CD4-positive, alpha-beta memory T cell (primary cell): ENCODE measurements at regions of chr11 and their contacts with region 1.

Region 1: DNA sequence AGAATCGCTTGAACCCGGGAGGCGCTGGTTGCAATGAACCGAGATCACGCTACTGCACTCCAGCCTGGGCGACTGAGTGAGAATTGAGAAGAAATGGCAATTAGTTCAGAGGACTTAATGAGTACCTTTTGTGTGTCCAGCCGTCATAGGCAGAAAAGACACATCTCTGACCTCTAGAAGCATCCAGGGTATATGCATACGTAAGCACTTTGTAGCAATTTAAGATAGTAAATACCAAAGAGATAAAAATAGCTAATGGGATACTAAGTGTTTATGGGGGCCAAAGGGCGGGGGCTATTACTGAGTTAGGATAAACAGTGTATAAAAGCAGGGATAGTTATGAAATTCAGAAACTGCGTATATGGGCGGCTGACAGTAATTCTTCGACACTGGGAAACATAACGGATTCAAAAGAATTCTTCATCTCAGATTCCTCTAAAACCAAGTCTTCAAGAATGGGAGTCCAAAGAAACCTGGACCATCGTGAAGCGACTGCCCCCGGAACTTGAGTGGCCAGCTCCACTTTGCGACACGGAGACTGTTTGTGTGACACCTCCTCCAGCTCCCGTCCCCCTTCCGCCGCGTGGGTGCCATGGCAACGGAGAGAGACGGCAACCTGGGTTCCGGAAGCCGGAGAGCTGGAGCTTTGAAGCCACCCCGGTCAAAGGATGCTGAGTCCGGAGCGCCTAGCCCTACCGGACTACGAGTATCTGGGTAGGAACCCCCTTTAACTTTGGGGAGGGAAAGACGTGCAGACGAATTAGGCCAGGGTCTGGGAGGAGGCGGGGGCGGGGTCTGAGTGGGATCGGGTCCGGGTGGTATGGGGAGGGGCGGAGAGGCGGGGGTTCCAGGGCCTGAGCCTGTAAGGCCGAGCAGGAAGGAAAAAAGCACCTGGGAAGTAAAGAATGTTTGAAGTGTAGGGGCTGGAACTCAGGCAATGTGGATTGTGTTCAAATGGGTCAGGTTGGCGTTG is at the start of gene CSTPP1:
- DNase-seq: peak; percentile 87 to 91 (median 88)
- H3K4me3 ChIP-seq: peak within 1 kb of the TSS; percentile 39 to 50
- H3K4me3 Mint-ChIP-seq: peak within 1 kb of the TSS; percentile 91 to 97 (median 94)
- H3K27ac ChIP-seq: peak within 1 kb of the TSS; percentile 41
- H3K27ac Mint-ChIP-seq: peak within 1 kb of the TSS; percentile 88 to 97 (median 96)
- H3K4me1 ChIP-seq: peaks cover 12% of the 10 kb centered on the region
- H3K4me1 Mint-ChIP-seq: peaks cover 14 to 24% (median 17%) of the 10 kb centered on the region in 4 donors
- H3K27me3 ChIP-seq: no peaks in the 10 kb centered on the region
- H3K27me3 Mint-ChIP-seq: peaks cover 0 to 7% of the 10 kb centered on the region in 2 donors
- total RNA-seq, gene CSTPP1: 12.4 to 12.8 TPM

Region 2: GRCh38 chr11:46616998-46617675 is 319.3 kb before region 1 on chr11 and contains the starts of genes ATG13 and HARBI1:
- CTCF ChIA-PET with region 1: no interaction called
- POLR2A ChIA-PET with region 1: no interaction called
- intact Hi-C with region 1: no loop called
- DNase-seq: peak; percentile 92 to 95 (median 93)
- H3K4me3 ChIP-seq: peak within 1 kb of the TSS; percentile 94 to 99
- H3K4me3 Mint-ChIP-seq: peak within 1 kb of the TSS; percentile 93 to 100 (median 99)
- H3K27ac ChIP-seq: peak within 1 kb of the TSS; percentile 99
- H3K27ac Mint-ChIP-seq: peak within 1 kb of the TSS; percentile 98 to 100 (median 99)
- H3K4me1 ChIP-seq: peaks cover 53% of the 10 kb centered on the region
- H3K4me1 Mint-ChIP-seq: peaks cover 24 to 58% (median 41%) of the 10 kb centered on the region in 4 donors
- H3K27me3 ChIP-seq: no peaks in the 10 kb centered on the region
- H3K27me3 Mint-ChIP-seq: no peaks in the 10 kb centered on the region
- total RNA-seq, gene ATG13: 86.0 to 96.2 TPM
- total RNA-seq, gene HARBI1: 7.2 to 9.4 TPM

Region 3: DNA sequence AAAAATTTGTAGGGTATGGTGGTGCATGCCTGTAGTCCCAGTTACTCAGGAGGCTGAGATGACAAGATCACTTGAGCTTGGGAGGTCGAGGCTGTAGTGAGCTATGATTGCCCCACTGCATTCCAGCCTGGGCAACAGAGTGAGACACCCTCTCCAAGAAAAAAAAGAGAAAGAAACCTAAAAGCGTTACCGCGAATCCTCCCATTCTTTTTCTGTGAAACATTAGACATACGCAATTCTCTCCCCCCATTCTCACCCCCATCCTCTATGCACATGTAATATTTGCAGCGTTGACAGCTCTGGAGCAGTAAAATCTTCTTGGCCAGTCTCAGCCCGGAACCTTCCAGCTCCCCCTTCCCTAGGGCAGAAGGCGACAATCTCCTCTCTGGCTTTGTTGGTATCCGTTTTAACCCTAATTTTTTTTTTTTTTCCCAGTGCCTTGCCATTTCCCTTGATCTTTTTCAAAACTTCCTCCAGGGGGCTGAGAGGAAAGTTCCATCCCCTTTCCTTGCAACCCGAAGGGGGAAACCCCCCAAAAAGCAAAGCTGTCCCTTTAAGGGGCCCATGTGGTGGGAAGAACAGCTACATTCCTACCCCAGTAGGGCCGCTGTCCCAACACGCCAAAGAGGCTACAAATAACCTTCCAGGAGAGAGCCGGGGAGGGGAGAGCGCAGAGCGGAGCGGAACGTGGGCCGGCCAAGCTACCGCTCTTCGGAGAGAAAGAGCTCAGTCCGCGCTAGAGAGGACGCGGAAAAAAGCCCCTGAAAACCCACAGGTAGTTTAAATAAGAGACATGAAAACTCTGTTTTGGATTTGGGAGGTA is 19.9 kb before region 1 on chr11:
- CTCF ChIA-PET with region 1: interaction called, 3 read pairs
- POLR2A ChIA-PET with region 1: interaction called, 5 read pairs
- intact Hi-C with region 1: loop called (anchors 2 kb)
- DNase-seq: peak in 1 of 5 donors; percentile 10
- H3K4me3 ChIP-seq: peak overlapping the region; percentile 14 to 56
- H3K4me3 Mint-ChIP-seq: peak overlapping the region; percentile 73 to 91 (median 82)
- H3K27ac ChIP-seq: no peak overlapping the region
- H3K27ac Mint-ChIP-seq: peak overlapping the region in 3 of 7 donors; percentile 48 to 70 (median 60)
- H3K4me1 ChIP-seq: peaks cover 25% of the 10 kb centered on the region
- H3K4me1 Mint-ChIP-seq: peaks cover 16 to 37% (median 28%) of the 10 kb centered on the region in 4 donors
- H3K27me3 ChIP-seq: peaks cover 54% of the 10 kb centered on the region
- H3K27me3 Mint-ChIP-seq: peaks cover 58 to 66% of the 10 kb centered on the region in 2 donors

Region 4: GRCh38 chr11:46948378-46949131 is 12.1 kb after region 1 on chr11:
- CTCF ChIA-PET with region 1: no interaction called
- POLR2A ChIA-PET with region 1: no interaction called
- intact Hi-C with region 1: no loop called
- DNase-seq: no peak
- H3K4me3 ChIP-seq: no peak overlapping the region
- H3K4me3 Mint-ChIP-seq: no peak overlapping the region
- H3K27ac ChIP-seq: no peak overlapping the region
- H3K27ac Mint-ChIP-seq: no peak overlapping the region
- H3K4me1 ChIP-seq: peaks cover 8% of the 10 kb centered on the region
- H3K4me1 Mint-ChIP-seq: peaks cover 0 to 8% (median 4%) of the 10 kb centered on the region in 4 donors
- H3K27me3 ChIP-seq: no peaks in the 10 kb centered on the region
- H3K27me3 Mint-ChIP-seq: no peaks in the 10 kb centered on the region

Region 5: GRCh38 chr11:47426061-47426956 is 489.9 kb after region 1 on chr11 and contains the start of gene PSMC3:
- CTCF ChIA-PET with region 1: no interaction called
- POLR2A ChIA-PET with region 1: no interaction called
- intact Hi-C with region 1: loop called (anchors 2 kb)
- DNase-seq: peak; percentile 94 to 97 (median 96)
- H3K4me3 ChIP-seq: peak within 1 kb of the TSS; percentile 64 to 91
- H3K4me3 Mint-ChIP-seq: peak within 1 kb of the TSS; percentile 99 to 100 (median 100)
- H3K27ac ChIP-seq: peak within 1 kb of the TSS; percentile 85
- H3K27ac Mint-ChIP-seq: peak within 1 kb of the TSS; percentile 92 to 99 (median 99)
- H3K4me1 ChIP-seq: peaks cover 18% of the 10 kb centered on the region
- H3K4me1 Mint-ChIP-seq: peaks cover 12 to 32% (median 22%) of the 10 kb centered on the region in 4 donors
- H3K27me3 ChIP-seq: no peaks in the 10 kb centered on the region
- H3K27me3 Mint-ChIP-seq: no peaks in the 10 kb centered on the region
- total RNA-seq, gene PSMC3: 53.9 to 59.6 TPM

Region 6: DNA sequence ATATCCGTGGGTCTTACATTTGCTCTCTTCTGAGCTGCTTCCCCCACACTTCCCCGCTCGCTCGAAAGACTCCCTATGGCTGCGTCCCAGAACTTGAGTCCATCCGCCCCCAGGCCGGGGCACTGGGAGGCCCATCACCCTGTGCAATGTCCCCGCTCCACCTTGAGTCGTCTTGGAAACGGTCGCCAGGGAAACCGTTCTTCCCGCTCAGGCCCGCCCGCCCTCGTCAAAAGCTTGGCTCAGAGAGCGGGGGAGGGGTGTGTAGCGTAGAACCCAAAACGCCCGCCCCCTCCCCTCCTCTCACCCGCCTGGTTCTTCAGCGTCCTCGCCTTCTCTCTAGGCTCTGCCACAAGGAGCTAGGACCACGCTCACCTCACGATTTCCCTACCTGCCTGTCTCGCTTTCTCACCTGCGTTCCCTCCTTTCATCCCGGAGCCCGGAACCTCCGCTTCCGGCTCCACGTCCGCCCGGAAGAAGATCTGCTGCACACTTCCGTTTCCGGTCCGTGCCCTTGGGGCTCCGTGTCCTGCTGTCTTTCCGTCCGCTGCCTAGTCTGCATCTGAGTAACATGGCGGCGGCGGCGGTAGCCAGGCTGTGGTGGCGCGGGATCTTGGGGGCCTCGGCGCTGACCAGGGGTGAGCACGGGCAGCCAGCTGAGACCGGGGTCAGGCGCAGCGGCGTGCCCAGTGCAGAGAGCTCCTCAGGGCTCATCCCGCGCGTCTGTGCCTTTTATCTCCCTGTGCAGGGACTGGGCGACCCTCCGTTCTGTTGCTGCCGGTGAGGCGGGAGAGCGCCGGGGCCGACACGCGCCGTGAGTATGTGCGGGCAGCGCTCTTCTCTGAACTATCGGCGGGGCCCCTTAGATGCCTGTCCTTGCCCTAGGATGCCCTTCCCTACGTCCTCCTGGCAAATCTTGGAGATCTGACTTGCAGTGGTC is 642.4 kb after region 1 on chr11 and contains the starts of genes KBTBD4 and NDUFS3:
- CTCF ChIA-PET with region 1: no interaction called
- POLR2A ChIA-PET with region 1: no interaction called
- intact Hi-C with region 1: loop called (anchors 2 kb)
- DNase-seq: peak; percentile 87 to 90 (median 88)
- H3K4me3 ChIP-seq: peak within 1 kb of the TSS; percentile 80 to 93
- H3K4me3 Mint-ChIP-seq: peak within 1 kb of the TSS; percentile 97 to 100 (median 100)
- H3K27ac ChIP-seq: peak within 1 kb of the TSS; percentile 83
- H3K27ac Mint-ChIP-seq: peak within 1 kb of the TSS; percentile 96 to 100 (median 100)
- H3K4me1 ChIP-seq: peaks cover 42% of the 10 kb centered on the region
- H3K4me1 Mint-ChIP-seq: peaks cover 19 to 48% (median 35%) of the 10 kb centered on the region in 4 donors
- H3K27me3 ChIP-seq: no peaks in the 10 kb centered on the region
- H3K27me3 Mint-ChIP-seq: peaks cover 0 to 1% of the 10 kb centered on the region in 2 donors
- total RNA-seq, gene KBTBD4: 21.2 to 22.5 TPM
- total RNA-seq, gene NDUFS3: 70.9 to 71.0 TPM